HCT116 (cell line): ENCODE measurements at regions of chr1 and their contacts with region 1.

Region 1: GRCh38 chr1:113978863-113979702 is at the start of gene OLFML3:
- DNase-seq: peak; percentile 66
- ATAC-seq: peak; percentile 88
- H3K4me3 ChIP-seq: no peak within 1 kb of the TSS
- H3K27ac ChIP-seq: no peak within 1 kb of the TSS
- H3K4me1 ChIP-seq: peaks cover 5 to 10% of the 10 kb centered on the region in 2 experiments; a peak in 3 of 4 replicates
- H3K27me3 ChIP-seq: no peaks in the 10 kb centered on the region
- CTCF ChIP-seq: peak; percentile 61 to 72 (median 70); a peak in 5 of 6 replicates
- POLR2A ChIP-seq: no peak
- RAD21 ChIP-seq: peak; percentile 83
- total RNA-seq, gene OLFML3: 0.25 TPM

Region 2: DNA sequence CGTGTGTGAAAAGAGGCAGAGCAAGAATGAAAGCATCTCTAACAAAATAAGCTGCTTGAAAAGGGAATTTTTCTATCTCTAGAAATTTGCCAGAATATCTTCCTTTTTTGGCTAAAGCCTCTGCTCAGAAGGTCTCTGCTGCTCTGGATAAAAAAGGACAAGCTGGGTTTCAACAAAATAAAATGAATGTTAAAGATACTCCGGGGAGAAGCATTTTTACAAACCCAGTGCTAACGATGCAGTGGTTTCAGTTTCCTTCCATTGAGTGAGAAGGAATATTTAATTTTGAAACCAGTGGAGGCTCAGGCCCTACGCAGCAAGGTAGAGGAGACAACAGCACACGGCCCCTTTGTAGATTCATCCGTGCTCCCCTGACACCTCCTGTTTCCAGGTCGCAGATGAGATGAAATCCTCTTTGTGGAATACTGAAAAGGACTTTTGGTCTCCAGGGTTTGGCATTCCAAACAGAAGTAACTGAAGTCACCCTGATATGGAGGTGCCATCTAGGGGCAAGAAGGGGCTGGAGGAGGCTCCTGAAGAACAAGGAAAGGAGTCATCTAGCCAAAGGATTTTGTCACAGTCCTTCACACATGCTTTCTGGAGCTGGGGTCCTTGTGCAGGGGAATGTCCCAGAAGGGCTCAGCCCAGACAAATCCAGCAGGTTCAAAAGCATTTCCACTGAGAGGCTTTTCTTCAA is 240.2 kb after region 1 on chr1:
- CTCF ChIA-PET with region 1: interaction called, 3 read pairs
- POLR2A ChIA-PET with region 1: no interaction called
- RAD21 ChIA-PET with region 1: no interaction called
- intact Hi-C with region 1: loop called (anchors 5 kb)
- DNase-seq: no peak
- ATAC-seq: peak; percentile 53
- H3K4me3 ChIP-seq: no peak overlapping the region
- H3K27ac ChIP-seq: no peak overlapping the region
- H3K4me1 ChIP-seq: no peaks in the 10 kb centered on the region
- H3K27me3 ChIP-seq: peaks cover 35% of the 10 kb centered on the region
- CTCF ChIP-seq: peak in 2 of 3 experiments; percentile 16 to 17; a peak in 1 of 6 replicates
- POLR2A ChIP-seq: no peak
- RAD21 ChIP-seq: peak; percentile 56

Region 3: DNA sequence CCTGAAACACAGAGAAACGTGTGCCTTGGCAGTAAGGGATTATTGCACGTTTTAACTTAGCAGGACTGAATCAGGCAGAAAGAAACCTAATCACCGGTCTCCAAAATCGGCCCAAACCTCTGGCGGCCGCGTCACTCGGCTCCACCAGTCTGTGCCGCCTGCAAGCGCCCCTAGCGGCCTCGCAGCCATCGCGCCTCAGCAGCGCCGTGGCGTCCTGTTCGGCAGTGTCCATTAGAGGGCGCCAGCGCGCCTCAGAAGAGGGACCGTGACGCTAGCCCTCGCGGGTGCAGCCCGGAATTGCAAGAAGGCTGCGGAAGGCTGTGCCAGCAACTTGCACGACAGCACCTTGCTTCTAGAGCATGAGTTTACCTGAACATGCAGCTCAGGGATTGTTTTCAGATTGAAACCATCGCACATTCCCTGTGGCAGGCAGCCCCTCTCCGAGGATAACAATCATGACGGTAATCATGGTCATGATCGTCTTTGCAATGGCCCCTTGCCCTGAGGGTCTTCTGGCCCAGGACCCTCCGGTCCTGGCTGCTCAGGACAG is 367.5 kb after region 1 on chr1:
- CTCF ChIA-PET with region 1: interaction called, 6 read pairs
- POLR2A ChIA-PET with region 1: no interaction called
- RAD21 ChIA-PET with region 1: no interaction called
- intact Hi-C with region 1: loop called (anchors 1 kb)
- DNase-seq: peak; percentile 89
- ATAC-seq: peak; percentile 99
- H3K4me3 ChIP-seq: peak overlapping the region; percentile 30 to 47
- H3K27ac ChIP-seq: no peak overlapping the region
- H3K4me1 ChIP-seq: peaks cover 0 to 11% of the 10 kb centered on the region in 2 experiments; a peak in 1 of 4 replicates
- H3K27me3 ChIP-seq: no peaks in the 10 kb centered on the region
- CTCF ChIP-seq: peak; percentile 100
- POLR2A ChIP-seq: no peak
- RAD21 ChIP-seq: peak; percentile 99

Region 4: DNA sequence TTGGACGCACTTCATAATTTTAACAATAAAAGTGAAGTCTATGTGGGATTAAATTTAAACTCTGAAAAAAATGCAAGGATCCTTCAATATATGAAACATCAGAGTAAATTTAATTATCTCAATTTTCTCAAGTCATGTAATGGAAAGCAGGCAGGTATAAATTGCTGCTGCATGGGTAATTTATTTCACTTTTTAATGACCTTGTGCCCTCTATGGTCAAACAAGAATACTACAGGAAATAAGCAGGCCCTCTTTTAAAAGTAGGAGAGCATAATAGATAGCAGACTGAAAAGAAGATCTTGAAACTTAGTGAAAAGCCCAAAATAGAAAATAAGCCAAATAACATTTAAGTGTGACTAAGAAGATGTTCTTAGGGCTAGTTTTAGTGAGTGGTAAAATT is 579.5 kb after region 1 on chr1:
- CTCF ChIA-PET with region 1: no interaction called
- POLR2A ChIA-PET with region 1: no interaction called
- RAD21 ChIA-PET with region 1: no interaction called
- intact Hi-C with region 1: loop called (anchors 2 kb)
- DNase-seq: peak; percentile 6
- ATAC-seq: peak; percentile 55; the same call in 1 of the 2 replicates
- H3K4me3 ChIP-seq: no peak overlapping the region
- H3K27ac ChIP-seq: no peak overlapping the region
- H3K4me1 ChIP-seq: no peaks in the 10 kb centered on the region
- H3K27me3 ChIP-seq: no peaks in the 10 kb centered on the region
- CTCF ChIP-seq: peak; percentile 23 to 67 (median 51); a peak in 4 of 6 replicates
- POLR2A ChIP-seq: no peak
- RAD21 ChIP-seq: peak; percentile 65

Region 5: DNA sequence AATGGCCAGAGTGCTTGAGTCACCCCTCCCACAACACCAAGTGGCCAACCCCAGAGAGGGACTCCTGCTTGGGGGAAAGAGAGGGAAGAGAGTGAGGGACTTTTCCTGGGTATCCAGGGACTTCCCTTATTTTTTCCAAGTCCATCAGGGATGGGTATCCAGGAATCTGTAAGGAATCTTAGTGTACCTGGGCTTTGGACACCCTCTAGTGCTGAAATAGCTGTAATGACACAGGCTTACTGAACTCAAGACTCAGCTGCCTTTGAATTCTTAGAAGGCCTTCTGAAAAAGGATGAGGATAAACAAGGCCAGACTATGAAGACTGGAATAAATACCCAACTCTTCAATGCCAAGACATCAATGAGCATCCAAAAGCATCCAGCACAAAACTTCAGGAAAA is 1062.6 kb after region 1 on chr1:
- CTCF ChIA-PET with region 1: interaction called, 5 read pairs
- POLR2A ChIA-PET with region 1: no interaction called
- RAD21 ChIA-PET with region 1: no interaction called
- intact Hi-C with region 1: loop called (anchors 5 kb)
- DNase-seq: peak; percentile 46
- ATAC-seq: peak; percentile 86
- H3K4me3 ChIP-seq: no peak overlapping the region
- H3K27ac ChIP-seq: no peak overlapping the region
- H3K4me1 ChIP-seq: no peaks in the 10 kb centered on the region
- H3K27me3 ChIP-seq: no peaks in the 10 kb centered on the region
- CTCF ChIP-seq: peak; percentile 55 to 62 (median 61); a peak in 5 of 6 replicates
- POLR2A ChIP-seq: no peak
- RAD21 ChIP-seq: peak; percentile 76